ENCODE measurements at regions of chr5 and their contacts with region 1.

Region 1: GRCh38 chr5:147558826-147559225 is 49.0 kb upstream of the DPYSL3 start:
- DNase-seq: peak; percentile 73 to 87 (median 81)
- H3K4me3 ChIP-seq: no peak overlapping the region
- H3K27ac ChIP-seq: no peak overlapping the region
- H3K4me1 ChIP-seq: peaks cover 0 to 5% (median 1%) of the 10 kb centered on the region in 4 experiments
- H3K27me3 ChIP-seq: peaks cover 0 to 3% (median 0%) of the 10 kb centered on the region in 5 experiments

Region 2: DNA sequence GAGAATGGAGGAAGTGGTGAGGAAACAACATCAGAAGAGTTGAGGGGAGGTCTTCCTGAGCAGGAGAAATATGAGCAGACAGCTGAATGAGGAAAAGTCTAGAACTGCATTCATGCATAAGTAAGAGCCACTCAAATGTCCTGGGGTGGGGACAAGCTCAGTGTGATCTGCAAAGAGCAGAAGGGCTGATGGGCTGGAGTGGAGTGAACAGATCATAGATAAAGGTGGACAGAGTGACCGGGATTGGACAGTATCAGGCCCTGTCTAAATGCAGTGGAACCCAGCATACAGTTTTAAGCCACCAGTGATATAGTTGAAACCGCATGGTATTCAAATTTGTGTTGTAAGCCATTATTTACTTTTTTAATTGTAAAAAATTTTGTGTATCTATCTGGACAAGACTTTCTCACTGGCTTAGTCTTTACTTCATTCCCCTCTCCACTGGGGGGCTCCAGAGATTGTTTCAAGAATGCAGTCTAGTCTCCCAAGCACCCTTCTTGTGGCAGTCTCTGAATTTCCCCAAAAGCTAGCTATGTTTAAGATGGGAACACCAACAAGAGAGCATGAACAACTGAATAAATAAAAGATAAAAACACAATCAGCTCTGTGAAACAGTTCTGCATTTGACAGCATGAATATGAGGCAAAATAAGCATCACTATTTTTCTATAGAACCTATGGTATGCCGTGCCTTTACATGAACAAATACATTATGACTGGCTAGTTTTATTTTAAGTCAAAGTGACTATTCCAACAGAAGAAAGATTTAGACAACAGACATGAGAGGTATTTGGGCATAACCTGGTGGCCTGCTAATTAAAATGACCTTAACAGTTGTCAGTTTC is 334.7 kb before region 1 on chr5:
- CTCF ChIA-PET with region 1: interaction called, 12 read pairs
- POLR2A ChIA-PET with region 1: no interaction called
- DNase-seq: peak; percentile 21 to 57 (median 44)
- H3K4me3 ChIP-seq: no peak overlapping the region
- H3K27ac ChIP-seq: no peak overlapping the region
- H3K4me1 ChIP-seq: peaks cover 0 to 10% (median 6%) of the 10 kb centered on the region in 4 experiments
- H3K27me3 ChIP-seq: no peaks in the 10 kb centered on the region

Region 3: DNA sequence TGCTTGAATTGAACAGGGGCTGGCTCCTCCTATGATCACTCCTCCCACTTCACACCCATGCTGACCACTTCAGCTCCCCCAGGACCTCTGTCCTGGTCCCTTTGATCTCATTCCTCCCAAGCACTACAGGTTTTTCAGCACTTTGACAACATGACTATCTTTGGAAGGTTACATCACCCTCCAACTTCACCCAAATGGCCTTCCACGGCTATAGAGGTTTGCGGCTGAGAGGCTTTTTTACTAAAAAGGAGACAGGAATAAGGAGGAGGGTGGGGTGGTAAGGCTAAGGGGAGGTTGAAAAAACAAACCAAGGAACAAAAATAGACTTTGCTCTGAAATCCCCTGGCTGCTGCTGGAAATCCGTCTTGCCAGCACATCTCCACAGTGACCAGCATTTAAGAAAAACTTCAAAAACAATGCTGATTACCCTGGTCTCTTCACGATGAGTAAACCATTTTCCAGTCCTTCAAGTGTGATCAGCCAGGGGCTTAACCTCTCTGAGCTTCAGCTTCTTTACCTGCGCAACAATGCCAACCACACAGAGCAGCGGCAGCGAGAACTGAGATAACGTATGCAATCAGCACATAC is 151.6 kb before region 1 on chr5:
- CTCF ChIA-PET with region 1: no interaction called
- POLR2A ChIA-PET with region 1: no interaction called
- DNase-seq: no peak
- H3K4me3 ChIP-seq: no peak overlapping the region
- H3K27ac ChIP-seq: no peak overlapping the region
- H3K4me1 ChIP-seq: peaks cover 0 to 6% (median 0%) of the 10 kb centered on the region in 4 experiments
- H3K27me3 ChIP-seq: no peaks in the 10 kb centered on the region

Region 4: GRCh38 chr5:147453875-147454814 is 104.7 kb before region 1 on chr5:
- CTCF ChIA-PET with region 1: interaction called, 115 read pairs
- POLR2A ChIA-PET with region 1: no interaction called
- DNase-seq: peak; percentile 87 to 93 (median 92)
- H3K4me3 ChIP-seq: peak overlapping the region; percentile 64 to 84 (median 70)
- H3K27ac ChIP-seq: peak overlapping the region in 1 of 2 experiments; percentile 39
- H3K4me1 ChIP-seq: peaks cover 7 to 22% (median 20%) of the 10 kb centered on the region in 4 experiments
- H3K27me3 ChIP-seq: peaks cover 6 to 34% (median 23%) of the 10 kb centered on the region in 5 experiments

Region 5: GRCh38 chr5:147464211-147464610 is 94.6 kb before region 1 on chr5:
- CTCF ChIA-PET with region 1: interaction called, 115 read pairs
- POLR2A ChIA-PET with region 1: interaction called, 3 read pairs
- DNase-seq: peak; percentile 77 to 86 (median 82)
- H3K4me3 ChIP-seq: no peak overlapping the region
- H3K27ac ChIP-seq: no peak overlapping the region
- H3K4me1 ChIP-seq: peaks cover 0 to 8% (median 0%) of the 10 kb centered on the region in 4 experiments
- H3K27me3 ChIP-seq: peaks cover 0 to 2% (median 0%) of the 10 kb centered on the region in 5 experiments

Region 6: GRCh38 chr5:147483961-147484707 is 74.7 kb before region 1 on chr5:
- CTCF ChIA-PET with region 1: interaction called, 22 read pairs
- POLR2A ChIA-PET with region 1: no interaction called
- DNase-seq: peak; percentile 95 to 99 (median 98)
- H3K4me3 ChIP-seq: peak overlapping the region in 2 of 7 experiments; percentile 8 to 38
- H3K27ac ChIP-seq: peak overlapping the region; percentile 99 to 100
- H3K4me1 ChIP-seq: peaks cover 15 to 65% (median 55%) of the 10 kb centered on the region in 4 experiments
- H3K27me3 ChIP-seq: no peaks in the 10 kb centered on the region

Region 7: DNA sequence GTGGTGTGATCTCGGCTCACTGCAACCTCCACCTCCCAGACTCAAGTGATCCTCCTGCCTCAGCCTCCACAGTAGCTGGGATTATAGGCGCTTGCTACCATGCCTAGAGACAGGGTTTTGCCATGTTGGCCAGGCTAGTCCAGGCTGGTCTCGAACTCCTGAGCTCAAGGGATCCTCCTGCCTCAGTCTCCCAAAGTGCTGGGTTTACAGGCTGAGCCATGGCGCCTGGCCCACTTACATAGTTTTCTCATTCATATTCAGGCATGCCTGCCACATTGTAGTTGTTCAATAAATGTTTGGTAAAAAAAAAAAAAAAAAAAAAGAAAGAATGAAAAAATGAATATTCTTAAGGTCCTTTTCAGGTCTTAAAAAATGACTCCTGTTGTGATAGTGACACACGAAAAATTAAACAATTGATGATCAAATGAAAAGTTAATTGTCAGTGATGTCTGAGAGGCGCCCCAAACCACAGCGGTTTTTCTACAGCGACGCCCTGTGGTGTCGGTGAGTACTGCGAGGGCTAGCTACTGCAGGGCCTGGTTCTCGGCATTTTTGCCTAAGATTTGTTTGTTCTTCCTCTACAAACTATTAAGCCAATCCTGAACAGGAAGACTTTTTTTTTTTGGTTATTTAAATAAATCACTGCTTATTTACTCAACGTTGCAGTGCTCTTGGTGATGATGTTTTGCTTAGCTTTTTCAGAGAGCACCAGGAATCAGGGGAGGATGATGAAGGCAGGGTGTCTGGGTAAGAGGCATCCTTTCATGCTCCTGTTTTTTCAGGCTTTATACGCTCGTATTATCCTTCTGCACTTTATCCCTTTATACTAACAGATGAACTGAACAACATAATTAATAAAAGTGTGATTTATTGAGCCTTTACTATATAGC is 18.1 kb after region 1 on chr5:
- CTCF ChIA-PET with region 1: interaction called, 22 read pairs
- POLR2A ChIA-PET with region 1: no interaction called
- DNase-seq: peak; percentile 32 to 63 (median 58)
- H3K4me3 ChIP-seq: no peak overlapping the region
- H3K27ac ChIP-seq: no peak overlapping the region
- H3K4me1 ChIP-seq: no peaks in the 10 kb centered on the region
- H3K27me3 ChIP-seq: no peaks in the 10 kb centered on the region

Region 8: DNA sequence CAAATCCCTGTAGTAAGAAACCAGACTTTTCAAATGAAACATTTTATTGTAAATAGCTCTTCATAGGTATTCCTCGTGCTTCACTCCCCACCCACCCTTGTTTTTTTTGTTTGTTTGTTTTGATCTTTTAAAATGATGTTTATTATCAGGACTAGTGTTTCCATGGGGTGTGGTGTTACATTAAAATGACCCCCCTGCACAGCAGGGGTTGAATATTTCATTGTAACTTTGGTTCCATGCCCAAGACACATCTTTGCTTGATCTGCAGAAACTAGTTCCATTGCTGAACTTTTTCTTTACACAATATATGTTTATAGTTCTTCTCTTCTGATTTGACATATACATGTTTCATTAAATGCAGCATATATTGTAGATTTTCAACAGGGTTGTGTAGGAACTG is 32.3 kb after region 1 on chr5:
- CTCF ChIA-PET with region 1: no interaction called
- POLR2A ChIA-PET with region 1: no interaction called
- DNase-seq: no peak
- H3K4me3 ChIP-seq: no peak overlapping the region
- H3K27ac ChIP-seq: no peak overlapping the region
- H3K4me1 ChIP-seq: peaks cover 0 to 4% (median 0%) of the 10 kb centered on the region in 4 experiments
- H3K27me3 ChIP-seq: no peaks in the 10 kb centered on the region

Region 9: GRCh38 chr5:147613359-147613758 is 54.5 kb after region 1 on chr5:
- CTCF ChIA-PET with region 1: no interaction called
- POLR2A ChIA-PET with region 1: no interaction called
- DNase-seq: no peak
- H3K4me3 ChIP-seq: no peak overlapping the region
- H3K27ac ChIP-seq: no peak overlapping the region
- H3K4me1 ChIP-seq: no peaks in the 10 kb centered on the region
- H3K27me3 ChIP-seq: no peaks in the 10 kb centered on the region

Measured in common myeloid progenitor, CD34-positive (primary cell).